Ovary (tissue), 10 donors: ENCODE measurements at regions of chr5 and their contacts with region 1.

Region 1: DNA sequence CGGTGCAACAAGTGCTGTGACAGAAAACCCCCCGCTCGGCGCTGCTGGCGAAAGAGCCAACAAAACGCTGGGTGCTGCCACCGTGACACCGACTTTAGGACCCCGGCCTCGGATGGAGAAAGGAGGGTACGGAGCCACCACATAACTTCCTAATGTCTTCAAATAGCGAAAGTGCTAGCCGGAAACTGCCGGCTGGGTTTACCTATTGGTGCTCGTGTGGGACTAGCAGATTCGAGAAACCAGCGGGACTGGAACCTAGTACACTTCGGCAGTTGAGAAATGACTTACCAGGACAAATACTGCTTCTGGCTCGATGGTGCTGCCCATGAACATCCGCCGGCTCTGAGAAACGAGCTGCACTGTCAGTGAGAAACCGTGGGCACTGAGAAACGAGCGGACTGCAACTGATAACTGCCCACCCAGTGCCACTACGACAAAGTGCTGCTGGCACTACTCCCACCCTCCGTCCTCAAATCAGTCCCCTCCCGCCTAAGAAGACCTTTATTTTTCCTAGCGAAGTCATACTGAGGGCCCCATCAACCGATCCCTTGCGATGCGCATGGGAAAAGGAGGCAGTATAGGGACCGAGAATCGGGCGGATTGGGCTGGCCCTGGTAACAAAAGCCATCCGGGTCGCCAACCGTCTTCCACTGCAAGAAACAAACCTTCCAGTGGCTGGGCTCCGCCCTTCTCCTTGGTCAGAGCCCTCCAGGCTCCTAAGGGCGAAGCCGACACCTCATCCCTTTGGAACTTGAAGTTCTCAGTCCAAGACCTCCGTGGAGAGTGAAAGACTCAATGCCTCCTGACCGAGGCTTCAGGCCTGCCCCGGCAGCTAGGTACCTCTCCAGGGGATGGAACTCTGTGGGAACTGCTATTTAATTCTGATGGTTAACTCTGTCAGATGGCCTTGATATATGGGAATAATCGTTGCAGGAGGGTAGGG is 27.0 kb upstream of the ANXA2R start:
- DNase-seq: peak; percentile 88 to 92 (median 89)
- H3K4me3 ChIP-seq: peak overlapping the region; percentile 85
- H3K27ac ChIP-seq: peak overlapping the region; percentile 86 to 95
- H3K4me1 ChIP-seq: peaks cover 7% of the 10 kb centered on the region
- H3K27me3 ChIP-seq: no peaks in the 10 kb centered on the region
- CTCF ChIP-seq: no peak
- EP300 ChIP-seq: no peak
- POLR2A ChIP-seq: peak; percentile 91

Region 2: DNA sequence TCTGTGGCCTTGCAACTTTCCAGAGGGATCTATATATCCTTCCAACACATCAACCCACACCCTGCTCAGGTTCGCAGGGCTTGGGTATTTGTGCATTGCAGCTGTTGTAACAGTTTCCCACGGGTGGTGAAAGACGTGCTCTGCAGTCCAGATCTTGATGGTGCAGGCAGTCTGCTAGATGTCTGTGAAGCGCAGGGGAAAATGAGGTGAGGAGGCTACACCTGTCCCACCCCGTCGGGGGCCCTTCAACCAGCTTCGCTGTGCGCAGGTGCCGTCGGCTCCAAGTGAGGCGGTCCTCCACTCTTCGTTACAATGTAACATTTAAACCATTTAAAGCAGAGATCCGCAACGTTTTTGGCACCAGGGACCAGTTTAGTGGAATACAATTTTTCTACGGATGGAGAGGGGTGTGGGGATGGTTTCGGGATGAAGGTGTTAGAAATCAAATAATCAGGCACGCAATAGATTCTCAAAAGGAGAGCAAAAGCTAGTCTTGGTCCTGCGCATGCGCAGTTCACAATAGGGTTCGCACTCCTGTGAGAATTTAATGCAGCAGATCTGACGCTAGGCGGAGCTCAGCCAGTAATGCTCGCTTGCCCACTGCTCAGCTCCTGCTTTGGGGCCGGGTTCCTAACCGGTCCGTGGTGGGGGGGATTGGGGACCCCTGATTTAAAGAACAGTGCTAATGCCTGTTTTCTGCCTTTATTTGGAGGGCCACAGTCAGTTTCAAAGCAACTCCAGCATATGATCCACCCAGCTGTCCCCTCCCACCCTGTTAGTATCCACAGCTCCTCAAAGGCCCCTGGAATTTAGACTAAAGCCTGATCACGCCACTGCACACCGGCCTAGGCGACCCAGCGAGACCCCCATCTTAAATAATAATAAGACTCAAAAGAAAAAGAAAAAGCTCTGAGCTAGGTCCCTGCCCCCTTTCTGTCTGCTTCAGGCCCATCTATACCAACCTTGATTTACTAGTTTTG is 158.3 kb before region 1 on chr5:
- intact Hi-C with region 1: loop called in 1 of 4 experiments (anchors 10 kb)
- DNase-seq: peak; percentile 83 to 90 (median 88)
- H3K4me3 ChIP-seq: peak overlapping the region; percentile 31
- H3K27ac ChIP-seq: no peak overlapping the region
- H3K4me1 ChIP-seq: peaks cover 2% of the 10 kb centered on the region
- H3K27me3 ChIP-seq: no peaks in the 10 kb centered on the region
- CTCF ChIP-seq: peak; percentile 59 to 82 (median 61)
- EP300 ChIP-seq: no peak
- POLR2A ChIP-seq: no peak

Region 3: DNA sequence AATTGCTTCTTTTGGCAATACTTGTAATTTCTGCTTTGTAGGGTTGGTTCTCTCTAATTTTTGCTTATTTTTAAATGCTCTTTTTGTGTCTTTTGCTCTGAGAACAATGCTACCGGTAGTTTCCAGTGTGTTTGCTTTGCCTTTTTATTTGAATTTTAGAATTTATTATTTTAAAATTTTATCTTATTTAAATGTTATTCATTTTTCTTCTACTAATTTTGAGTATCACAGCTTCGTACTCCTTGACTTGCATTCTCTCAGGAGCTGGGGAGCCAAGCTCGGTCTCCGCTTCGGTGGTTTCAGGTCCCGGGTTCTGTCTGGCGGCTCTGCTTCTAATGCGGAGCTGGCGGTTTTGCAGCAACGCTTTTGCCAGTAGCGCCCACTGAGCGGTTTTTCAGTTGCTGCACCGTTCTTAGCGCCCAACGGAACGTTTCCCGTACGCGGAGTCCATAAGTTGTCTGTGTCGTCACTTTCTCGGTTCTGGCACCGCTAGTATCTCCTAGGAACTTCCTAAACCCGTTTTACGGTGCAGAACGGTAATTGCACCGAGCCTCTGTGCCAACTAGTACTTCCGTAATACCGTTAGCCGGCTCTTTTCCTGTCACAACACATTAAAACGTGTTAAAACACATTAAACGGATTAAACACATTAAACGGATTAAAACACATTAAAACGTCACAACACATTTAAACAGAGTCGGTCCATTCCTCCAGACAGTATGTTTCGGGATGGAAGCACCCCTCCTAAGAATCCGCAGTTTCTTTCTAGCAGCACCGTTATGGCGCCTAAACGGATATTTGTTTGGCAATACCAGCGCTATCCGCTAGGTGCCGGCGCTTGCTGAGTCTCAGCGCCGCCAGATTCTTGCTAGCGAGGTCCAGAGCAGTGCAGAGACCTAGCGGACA is 72.6 kb before region 1 on chr5:
- intact Hi-C with region 1: loop called in 1 of 4 experiments (anchors 2 kb)
- DNase-seq: peak; percentile 80 to 88 (median 82)
- H3K4me3 ChIP-seq: peak overlapping the region; percentile 21
- H3K27ac ChIP-seq: peak overlapping the region in 1 of 2 donors; percentile 8
- H3K4me1 ChIP-seq: peaks cover 6% of the 10 kb centered on the region
- H3K27me3 ChIP-seq: no peaks in the 10 kb centered on the region
- CTCF ChIP-seq: peak; percentile 70 to 79 (median 76)
- EP300 ChIP-seq: no peak
- POLR2A ChIP-seq: no peak

Region 4: DNA sequence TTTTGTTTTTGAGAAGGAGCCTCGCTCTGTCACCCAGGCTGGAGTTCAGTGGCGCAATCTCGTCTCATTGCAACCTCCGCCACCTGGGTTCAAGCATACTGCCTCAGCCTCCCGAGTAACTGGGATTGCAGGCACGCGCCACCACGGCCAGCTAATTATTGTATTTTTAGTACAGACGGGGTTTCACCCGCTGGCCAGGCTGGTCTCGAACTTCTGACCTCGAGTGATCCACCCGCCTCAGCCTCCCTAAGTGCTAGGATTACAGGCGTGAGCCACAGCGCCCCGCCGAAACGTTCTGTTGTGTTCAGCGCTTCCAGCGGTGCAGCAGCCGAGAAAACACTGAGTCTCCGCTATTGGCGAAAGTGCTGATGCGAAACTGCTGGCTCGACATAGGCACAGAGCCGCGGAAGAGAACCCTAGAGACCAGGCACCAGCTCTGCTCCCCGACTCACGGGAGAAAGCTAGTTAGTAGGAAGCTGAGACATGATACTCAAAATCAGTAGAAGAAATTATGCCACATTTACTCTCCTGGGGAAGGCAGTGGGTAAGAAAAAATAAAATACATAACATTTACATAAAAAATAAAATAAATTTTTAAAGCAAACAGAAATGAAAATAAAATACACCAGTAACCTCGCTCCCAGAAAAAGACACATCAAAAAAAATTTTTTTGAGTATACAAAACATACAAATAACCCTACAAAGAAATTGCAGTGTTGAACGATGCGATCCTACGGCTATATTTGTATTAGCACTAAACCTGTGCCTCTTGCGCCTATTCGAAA is 58.5 kb before region 1 on chr5:
- intact Hi-C with region 1: loop called in 1 of 4 experiments (anchors 2 kb)
- DNase-seq: peak; percentile 84 to 89 (median 86)
- H3K4me3 ChIP-seq: peak overlapping the region; percentile 41
- H3K27ac ChIP-seq: peak overlapping the region; percentile 1 to 82
- H3K4me1 ChIP-seq: peaks cover 2% of the 10 kb centered on the region
- H3K27me3 ChIP-seq: no peaks in the 10 kb centered on the region
- CTCF ChIP-seq: peak in 1 of 3 donors; percentile 7
- EP300 ChIP-seq: no peak
- POLR2A ChIP-seq: peak; percentile 59

Region 5: DNA sequence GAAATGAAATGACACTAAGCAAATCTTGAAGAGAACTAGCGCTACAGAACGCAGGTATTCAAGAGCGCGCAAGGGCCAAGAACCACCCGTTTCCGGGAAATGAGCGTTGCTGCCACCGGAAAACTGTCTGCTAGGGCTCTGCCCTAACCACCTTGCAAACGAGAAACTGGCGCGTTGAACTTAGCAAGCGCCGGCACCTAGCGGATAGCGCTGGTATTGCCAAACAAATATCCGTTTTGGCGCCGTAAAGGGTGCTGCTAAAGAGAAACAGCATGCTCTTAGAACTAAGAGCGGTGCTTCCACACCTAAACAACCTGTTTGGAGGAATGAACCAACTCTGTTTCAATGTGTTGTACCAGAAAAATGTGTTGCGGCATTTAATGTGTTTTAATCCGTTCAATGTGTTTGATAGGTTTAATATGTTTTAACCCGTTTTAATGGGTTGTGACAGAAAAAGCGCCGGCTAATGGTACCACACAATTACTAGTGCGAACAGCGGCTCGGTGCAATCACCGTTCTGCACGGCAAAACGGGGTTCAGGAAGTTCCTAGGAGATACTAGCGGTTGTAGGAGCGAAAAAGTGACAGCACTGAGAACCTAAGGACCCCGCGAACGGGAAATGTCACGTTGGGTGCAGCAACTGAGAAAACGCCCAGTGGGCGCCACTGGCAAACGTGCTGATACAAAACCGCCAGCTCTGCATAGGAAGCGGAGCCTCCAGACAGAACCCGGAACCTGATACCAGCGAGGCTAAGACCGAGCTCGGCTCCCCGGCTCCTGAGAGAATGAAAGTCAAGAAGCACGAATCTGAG is 26.6 kb before region 1 on chr5 and contains the start of gene ANXA2R:
- intact Hi-C with region 1: loop called in 2 of 4 experiments (anchors 1 to 2 kb)
- DNase-seq: peak; percentile 75 to 85 (median 77)
- H3K4me3 ChIP-seq: peak within 1 kb of the TSS; percentile 61
- H3K27ac ChIP-seq: peak within 1 kb of the TSS in 1 of 2 donors; percentile 92
- H3K4me1 ChIP-seq: no peaks in the 10 kb centered on the region
- H3K27me3 ChIP-seq: no peaks in the 10 kb centered on the region
- CTCF ChIP-seq: peak; percentile 54 to 64 (median 58)
- EP300 ChIP-seq: no peak
- POLR2A ChIP-seq: no peak
- total RNA-seq, gene ANXA2R: 1.1 to 2.7 (median 1.7) TPM

Region 6: DNA sequence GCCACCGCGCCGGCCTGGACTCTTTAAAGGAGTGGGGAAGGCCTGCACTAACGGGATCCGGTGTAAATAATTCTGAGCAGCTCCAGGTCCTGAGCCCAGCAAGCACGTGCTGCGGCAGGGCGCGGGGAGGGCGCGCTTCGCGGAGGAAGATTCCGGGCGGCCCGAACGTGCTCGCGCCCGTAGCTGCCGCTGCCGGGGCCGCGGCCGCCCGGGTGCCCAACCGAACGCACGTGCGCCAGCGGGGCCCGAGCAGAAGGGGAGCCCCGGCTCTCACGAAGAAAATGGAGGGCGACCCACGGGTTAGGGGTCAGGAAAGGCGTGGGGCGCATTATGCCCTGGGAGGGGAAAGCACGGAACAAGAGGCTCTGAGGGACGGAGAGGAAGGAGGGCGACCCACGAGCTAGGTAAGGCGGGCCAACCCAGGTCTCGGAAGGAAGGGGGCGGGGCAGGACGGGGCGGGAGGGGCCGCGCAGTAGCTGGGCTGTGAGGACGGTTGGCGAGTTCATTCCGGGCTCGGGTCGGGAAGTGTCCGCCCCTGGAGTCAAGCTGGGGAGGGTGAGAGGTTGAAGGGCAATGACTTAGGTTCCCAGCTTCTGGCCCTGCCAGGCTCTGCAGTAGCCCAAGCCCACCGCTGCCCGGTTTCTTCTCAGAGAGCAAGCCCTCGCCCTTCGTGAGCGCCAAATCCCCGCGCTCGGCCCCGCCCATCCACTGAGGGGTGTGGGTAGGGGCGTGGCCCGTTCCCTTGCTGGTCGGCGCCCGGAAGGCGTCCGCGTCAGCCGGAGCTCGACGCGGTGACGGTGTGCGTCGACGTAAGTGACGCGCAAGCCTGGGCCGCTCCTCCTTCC is 53.9 kb after region 1 on chr5 and contains the start of gene ZNF131:
- intact Hi-C with region 1: loop called in 2 of 4 experiments (anchors 1 to 2 kb)
- DNase-seq: peak; percentile 95 to 98 (median 97)
- H3K4me3 ChIP-seq: peak within 1 kb of the TSS; percentile 93
- H3K27ac ChIP-seq: peak within 1 kb of the TSS; percentile 97 to 99
- H3K4me1 ChIP-seq: peaks cover 1% of the 10 kb centered on the region
- H3K27me3 ChIP-seq: no peaks in the 10 kb centered on the region
- CTCF ChIP-seq: peak in 1 of 3 donors; percentile 5
- EP300 ChIP-seq: no peak
- POLR2A ChIP-seq: peak; percentile 63
- total RNA-seq, gene ZNF131: 25.6 to 50.2 (median 37.3) TPM